Esophagus muscularis mucosa (tissue), 4 donors: ENCODE measurements at regions of chr10 and their contacts with region 1.

Region 1: DNA sequence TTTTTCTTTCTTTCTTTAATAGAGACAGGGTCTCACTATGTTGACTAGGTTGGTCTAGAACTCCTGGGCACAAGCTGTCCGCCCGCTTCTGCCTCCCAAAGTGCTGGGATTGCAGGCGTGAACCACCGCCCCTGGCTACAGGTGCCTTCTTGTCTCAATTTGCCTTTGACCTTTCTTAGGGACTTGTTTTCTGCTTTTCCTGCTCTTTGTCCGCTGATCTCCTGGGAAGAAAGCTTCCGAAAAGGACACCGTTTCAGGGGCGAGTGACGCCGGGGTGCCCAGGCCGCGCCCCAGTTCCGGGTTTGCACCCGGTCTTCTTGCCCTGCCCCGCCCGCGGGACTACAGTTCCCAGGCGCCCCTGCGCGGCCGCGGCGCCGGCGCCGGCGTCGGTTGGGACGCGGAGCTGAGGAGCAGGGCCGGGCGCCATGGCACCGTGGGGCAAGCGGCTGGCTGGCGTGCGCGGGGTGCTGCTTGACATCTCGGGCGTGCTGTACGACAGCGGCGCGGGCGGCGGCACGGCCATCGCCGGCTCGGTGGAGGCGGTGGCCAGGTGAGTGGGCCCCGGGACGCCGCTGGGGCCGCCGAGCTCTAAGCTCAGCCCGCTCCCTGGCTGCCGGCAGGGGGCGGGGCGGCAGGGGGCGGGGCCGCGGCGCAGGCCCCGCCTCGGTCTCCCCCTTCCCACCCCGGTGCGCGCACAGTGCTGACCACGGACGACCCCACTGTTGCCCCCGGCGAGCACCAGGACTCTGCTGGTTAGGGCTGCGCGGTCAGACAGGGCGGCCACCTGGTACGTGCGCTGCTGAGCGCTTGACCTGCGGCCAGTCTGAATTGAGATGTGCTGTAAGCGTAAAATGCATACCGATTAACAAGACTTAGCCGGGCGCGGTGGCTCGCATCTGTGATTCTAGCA is at the start of gene LHPP:
- DNase-seq: peak; percentile 94
- H3K4me3 ChIP-seq: peak within 1 kb of the TSS; percentile 67 to 84 (median 78)
- H3K27ac ChIP-seq: peak within 1 kb of the TSS; percentile 85 to 90 (median 86)
- H3K4me1 ChIP-seq: peaks cover 3 to 15% (median 13%) of the 10 kb centered on the region in 4 donors
- H3K27me3 ChIP-seq: peaks cover 0 to 5% (median 0%) of the 10 kb centered on the region in 4 donors
- CTCF ChIP-seq: peak; percentile 61 to 66 (median 63)
- EP300 ChIP-seq: no peak
- POLR2A ChIP-seq: no peak
- total RNA-seq, gene LHPP: 10.8 to 20.9 (median 15.7) TPM

Region 2: DNA sequence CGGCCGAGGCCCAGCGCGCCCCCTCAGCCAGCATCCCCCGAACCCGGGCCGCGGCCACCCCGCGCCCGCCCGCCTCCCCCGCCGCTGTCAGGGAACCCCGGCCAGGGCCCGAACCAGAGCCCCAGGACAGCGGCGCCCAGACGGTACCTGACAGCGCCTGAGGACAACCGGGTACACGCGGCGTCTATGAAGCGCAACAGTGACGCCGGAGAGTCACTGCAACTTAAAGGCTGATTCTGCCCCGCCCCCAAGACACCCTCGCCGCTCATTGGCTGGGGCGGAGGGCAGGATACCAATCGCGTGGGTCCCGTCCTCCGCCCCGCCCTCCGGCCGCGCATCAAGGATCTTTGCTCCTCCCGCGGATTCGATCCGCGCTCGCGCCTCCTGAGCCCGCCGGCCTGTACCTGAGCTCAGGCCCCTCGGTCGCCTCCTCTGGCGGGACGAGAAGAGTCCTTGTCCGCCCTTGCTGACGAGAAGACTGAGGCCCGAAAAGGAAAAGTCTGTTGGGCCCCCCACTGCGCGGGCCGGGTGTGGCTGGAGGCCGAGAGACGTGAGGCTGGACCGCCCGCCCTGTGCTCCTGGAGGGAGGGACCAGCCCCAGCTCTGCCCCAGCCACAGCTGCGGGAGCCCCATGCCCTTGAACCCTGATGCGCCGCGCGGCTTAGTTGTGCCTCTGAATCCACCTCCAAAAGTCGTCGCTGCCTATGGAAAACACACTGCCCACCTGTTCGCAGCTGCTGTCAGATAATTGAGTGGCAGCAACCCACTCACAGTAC is 42.8 kb before region 1 on chr10 and contains the start of gene OAT:
- intact Hi-C with region 1: loop called (anchors 5 kb)
- DNase-seq: peak; percentile 98
- H3K4me3 ChIP-seq: peak within 1 kb of the TSS; percentile 79 to 97 (median 94)
- H3K27ac ChIP-seq: peak within 1 kb of the TSS; percentile 97 to 99 (median 98)
- H3K4me1 ChIP-seq: peaks cover 14 to 46% (median 46%) of the 10 kb centered on the region in 4 donors
- H3K27me3 ChIP-seq: no peaks in the 10 kb centered on the region
- CTCF ChIP-seq: no peak
- EP300 ChIP-seq: no peak
- POLR2A ChIP-seq: peak; percentile 92
- total RNA-seq, gene OAT: 98.8 to 169 (median 143) TPM